B cell (primary cell): ENCODE measurements at regions of chr12 and their contacts with region 1.

Region 1: GRCh38 chr12:92505254-92506231 is 197.2 kb upstream of the PLEKHG7 start:
- DNase-seq: peak; percentile 75
- ATAC-seq: peak; percentile 61
- H3K4me3 ChIP-seq: peak overlapping the region; percentile 16 to 62 (median 43)
- H3K4me3 Mint-ChIP-seq: peak overlapping the region; percentile 73
- H3K27ac ChIP-seq: peak overlapping the region; percentile 79 to 91
- H3K27ac Mint-ChIP-seq: peak overlapping the region; percentile 87
- H3K4me1 ChIP-seq: peaks cover 60 to 62% of the 10 kb centered on the region in 2 donors
- H3K4me1 Mint-ChIP-seq: peaks cover 65% of the 10 kb centered on the region
- H3K27me3 ChIP-seq: no peaks in the 10 kb centered on the region
- H3K27me3 Mint-ChIP-seq: no peaks in the 10 kb centered on the region
- CTCF ChIP-seq: no peak

Region 2: DNA sequence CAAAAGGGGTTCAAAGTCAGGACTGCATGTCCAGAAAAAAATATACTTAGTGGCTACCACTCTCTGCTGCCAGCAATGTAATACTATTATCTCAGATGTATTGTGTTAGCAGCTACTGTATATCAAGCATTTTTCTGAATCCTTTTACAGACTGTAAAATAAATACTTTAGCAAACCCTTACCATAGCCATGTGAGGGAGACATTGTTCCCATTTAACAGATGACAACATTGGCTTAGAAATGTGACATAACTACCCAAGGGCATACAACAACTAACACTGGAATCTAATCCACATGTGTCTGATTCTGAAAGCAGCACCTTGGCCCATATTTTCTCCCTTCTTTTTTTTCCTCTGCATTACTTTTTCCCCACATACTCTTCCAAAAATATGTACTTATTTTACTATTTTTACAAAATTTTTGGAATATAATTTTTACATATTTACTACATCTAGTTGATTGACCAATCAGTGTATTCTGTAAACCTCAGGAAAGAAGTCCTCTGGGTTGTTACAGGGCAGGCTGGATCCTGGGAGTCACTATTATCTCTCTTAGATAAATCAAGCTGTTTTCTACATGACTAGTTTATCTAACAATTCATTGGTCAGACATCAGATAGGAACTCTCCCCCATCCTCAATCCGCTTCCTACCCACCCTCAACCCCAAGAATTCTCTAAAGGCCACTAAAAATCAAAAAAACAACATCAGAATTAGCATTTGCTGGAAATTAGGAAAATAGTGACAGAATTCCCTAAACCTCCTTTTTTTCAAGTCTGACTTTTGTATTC is 514.0 kb before region 1 on chr12:
- CTCF ChIA-PET with region 1: interaction called, 4 read pairs
- POLR2A ChIA-PET with region 1: no interaction called
- intact Hi-C with region 1: loop called (anchors 10 kb)
- DNase-seq: peak; percentile 58
- ATAC-seq: peak; percentile 61
- H3K4me3 ChIP-seq: no peak overlapping the region
- H3K4me3 Mint-ChIP-seq: no peak overlapping the region
- H3K27ac ChIP-seq: no peak overlapping the region
- H3K27ac Mint-ChIP-seq: no peak overlapping the region
- H3K4me1 ChIP-seq: no peaks in the 10 kb centered on the region
- H3K4me1 Mint-ChIP-seq: peaks cover 3% of the 10 kb centered on the region
- H3K27me3 ChIP-seq: no peaks in the 10 kb centered on the region
- H3K27me3 Mint-ChIP-seq: no peaks in the 10 kb centered on the region
- CTCF ChIP-seq: peak; percentile 34

Region 3: DNA sequence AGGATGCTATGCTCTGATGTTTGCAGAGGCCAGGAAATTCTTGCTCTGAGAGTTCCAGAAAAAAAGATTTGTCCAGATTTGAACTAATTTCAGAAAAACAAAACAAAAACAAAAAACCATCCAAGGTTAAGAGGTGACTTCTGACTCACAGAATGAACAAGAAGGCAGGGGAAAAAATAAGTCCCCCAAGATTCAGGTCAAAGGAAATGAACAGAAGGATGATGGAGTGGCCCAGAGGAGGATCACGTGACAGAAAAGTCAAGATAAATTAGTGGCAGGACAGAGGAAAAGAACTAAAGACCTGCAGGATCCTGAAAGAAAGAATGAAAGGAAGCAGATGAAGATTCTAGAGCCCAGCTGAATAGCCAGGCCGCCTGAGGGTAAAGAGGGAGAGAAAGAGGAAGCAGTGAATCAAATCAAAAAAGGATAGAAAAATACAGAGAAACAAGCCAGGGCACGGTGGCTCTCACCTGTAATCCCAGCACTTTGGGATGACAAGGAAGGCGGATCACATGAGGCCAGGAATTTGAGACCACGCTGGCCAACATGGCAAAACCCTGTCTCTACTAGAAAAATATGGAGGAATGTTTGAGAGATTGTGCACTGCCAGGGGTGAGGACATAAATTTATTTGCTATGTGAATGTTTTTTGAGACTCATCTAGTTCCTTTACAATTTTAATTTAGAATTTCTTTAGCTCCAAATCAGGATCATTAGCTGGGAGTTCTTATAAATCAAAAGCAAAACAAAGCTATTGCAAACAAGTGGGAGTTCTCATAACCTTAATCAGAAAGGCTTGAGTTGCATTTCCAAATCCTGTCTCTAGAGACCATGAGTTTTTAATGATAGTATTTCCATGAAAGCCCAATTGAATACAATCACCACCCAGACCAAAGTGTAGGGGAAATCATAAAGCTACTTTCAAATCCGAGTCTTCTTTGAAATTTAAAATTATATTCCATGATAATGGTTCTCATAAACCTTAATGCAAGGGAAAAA is 19.9 kb before region 1 on chr12:
- CTCF ChIA-PET with region 1: interaction called, 10 read pairs
- POLR2A ChIA-PET with region 1: interaction called, 3 read pairs
- intact Hi-C with region 1: loop called (anchors 1 kb)
- DNase-seq: peak; percentile 52
- ATAC-seq: peak; percentile 15
- H3K4me3 ChIP-seq: peak overlapping the region in 1 of 5 experiments; percentile 20
- H3K4me3 Mint-ChIP-seq: peak overlapping the region; percentile 64
- H3K27ac ChIP-seq: peak overlapping the region; percentile 59 to 81
- H3K27ac Mint-ChIP-seq: peak overlapping the region; percentile 96
- H3K4me1 ChIP-seq: peaks cover 68 to 81% of the 10 kb centered on the region in 2 donors
- H3K4me1 Mint-ChIP-seq: peaks cover 77% of the 10 kb centered on the region
- H3K27me3 ChIP-seq: no peaks in the 10 kb centered on the region
- H3K27me3 Mint-ChIP-seq: no peaks in the 10 kb centered on the region
- CTCF ChIP-seq: no peak

Region 4: GRCh38 chr12:92520511-92520910 is 15.0 kb after region 1 on chr12:
- CTCF ChIA-PET with region 1: interaction called, 4 read pairs
- POLR2A ChIA-PET with region 1: interaction called, 6 read pairs
- intact Hi-C with region 1: loop called (anchors 2 kb)
- DNase-seq: no peak
- ATAC-seq: no peak
- H3K4me3 ChIP-seq: no peak overlapping the region
- H3K4me3 Mint-ChIP-seq: no peak overlapping the region
- H3K27ac ChIP-seq: no peak overlapping the region
- H3K27ac Mint-ChIP-seq: no peak overlapping the region
- H3K4me1 ChIP-seq: peaks cover 19 to 20% of the 10 kb centered on the region in 2 donors
- H3K4me1 Mint-ChIP-seq: peaks cover 33% of the 10 kb centered on the region
- H3K27me3 ChIP-seq: no peaks in the 10 kb centered on the region
- H3K27me3 Mint-ChIP-seq: no peaks in the 10 kb centered on the region
- CTCF ChIP-seq: no peak

Region 5: DNA sequence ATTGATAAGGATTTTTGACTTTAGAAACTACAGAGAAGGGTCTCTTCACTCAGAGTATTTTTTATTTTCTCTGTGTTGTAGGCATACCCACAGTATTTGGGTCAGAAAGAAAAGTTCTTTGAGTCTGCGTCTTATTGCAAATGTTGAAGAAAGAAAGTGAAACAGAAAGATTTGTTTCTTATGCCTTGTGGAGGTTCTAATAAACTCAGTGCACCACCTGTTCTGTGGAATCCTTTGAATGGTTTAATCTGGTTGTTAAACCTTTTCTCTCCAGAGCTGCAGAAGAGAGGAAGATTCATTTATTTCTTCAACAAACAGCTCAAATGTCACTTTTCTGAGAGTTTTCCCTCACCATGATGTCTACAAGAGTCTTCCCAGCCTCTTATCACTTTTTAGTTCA is 50.6 kb after region 1 on chr12:
- CTCF ChIA-PET with region 1: interaction called, 4 read pairs
- POLR2A ChIA-PET with region 1: interaction called, 3 read pairs
- intact Hi-C with region 1: loop called (anchors 5 kb)
- DNase-seq: peak; percentile 61
- ATAC-seq: peak; percentile 59
- H3K4me3 ChIP-seq: peak overlapping the region in 3 of 5 experiments; percentile 28 to 50 (median 33)
- H3K4me3 Mint-ChIP-seq: peak overlapping the region; percentile 71
- H3K27ac ChIP-seq: peak overlapping the region; percentile 72 to 73
- H3K27ac Mint-ChIP-seq: peak overlapping the region; percentile 86
- H3K4me1 ChIP-seq: peaks cover 57 to 65% of the 10 kb centered on the region in 2 donors
- H3K4me1 Mint-ChIP-seq: peaks cover 61% of the 10 kb centered on the region
- H3K27me3 ChIP-seq: no peaks in the 10 kb centered on the region
- H3K27me3 Mint-ChIP-seq: no peaks in the 10 kb centered on the region
- CTCF ChIP-seq: no peak